ENCODE measurements at regions of chr3 and their contacts with region 1.

Region 1: GRCh38 chr3:75001330-75001729 is 386.9 kb upstream of the CNTN3 start:
- DNase-seq: peak; percentile 5
- H3K4me3 ChIP-seq: no peak overlapping the region
- H3K27ac ChIP-seq: no peak overlapping the region
- H3K4me1 ChIP-seq: no peaks in the 10 kb centered on the region
- H3K27me3 ChIP-seq: no peaks in the 10 kb centered on the region
- CTCF ChIP-seq: peak; percentile 57 to 60

Region 2: DNA sequence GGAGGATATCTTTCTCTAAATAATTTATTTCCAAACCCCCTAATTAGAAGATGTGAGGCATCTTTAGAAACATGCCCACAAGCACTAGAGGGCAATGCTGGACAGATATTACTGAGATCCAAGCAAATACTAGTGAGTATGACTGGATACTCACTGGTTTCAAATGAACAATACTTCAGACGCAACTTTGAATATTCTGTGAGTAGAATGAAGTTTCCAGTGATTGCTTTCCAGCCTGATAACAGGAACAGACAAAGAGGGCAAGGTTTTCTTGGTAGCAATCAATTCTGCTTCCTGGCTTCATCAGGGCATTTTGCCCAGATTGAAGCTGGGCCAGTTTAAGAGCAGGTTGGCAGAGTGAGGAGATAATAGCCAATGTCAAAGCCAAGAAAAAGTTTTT is 934.0 kb before region 1 on chr3:
- CTCF ChIA-PET with region 1: no interaction called
- dilution Hi-C with region 1: no loop called
- in situ Hi-C with region 1: no loop called
- intact Hi-C with region 1: loop called (anchors 2 kb)
- DNase-seq: peak; percentile 29
- H3K4me3 ChIP-seq: no peak overlapping the region
- H3K27ac ChIP-seq: no peak overlapping the region
- H3K4me1 ChIP-seq: no peaks in the 10 kb centered on the region
- H3K27me3 ChIP-seq: peaks cover 5% of the 10 kb centered on the region
- CTCF ChIP-seq: peak; percentile 22 to 50